ENCODE measurements at regions of chr19 and their contacts with region 1.

Region 1: GRCh38 chr19:6021878-6022569 is 44.1 kb upstream of the RANBP3 start:
- DNase-seq: peak; percentile 79
- H3K4me3 Mint-ChIP-seq: no peak overlapping the region
- H3K27ac Mint-ChIP-seq: no peak overlapping the region
- H3K4me1 Mint-ChIP-seq: no peaks in the 10 kb centered on the region
- H3K27me3 Mint-ChIP-seq: no peaks in the 10 kb centered on the region

Region 2: DNA sequence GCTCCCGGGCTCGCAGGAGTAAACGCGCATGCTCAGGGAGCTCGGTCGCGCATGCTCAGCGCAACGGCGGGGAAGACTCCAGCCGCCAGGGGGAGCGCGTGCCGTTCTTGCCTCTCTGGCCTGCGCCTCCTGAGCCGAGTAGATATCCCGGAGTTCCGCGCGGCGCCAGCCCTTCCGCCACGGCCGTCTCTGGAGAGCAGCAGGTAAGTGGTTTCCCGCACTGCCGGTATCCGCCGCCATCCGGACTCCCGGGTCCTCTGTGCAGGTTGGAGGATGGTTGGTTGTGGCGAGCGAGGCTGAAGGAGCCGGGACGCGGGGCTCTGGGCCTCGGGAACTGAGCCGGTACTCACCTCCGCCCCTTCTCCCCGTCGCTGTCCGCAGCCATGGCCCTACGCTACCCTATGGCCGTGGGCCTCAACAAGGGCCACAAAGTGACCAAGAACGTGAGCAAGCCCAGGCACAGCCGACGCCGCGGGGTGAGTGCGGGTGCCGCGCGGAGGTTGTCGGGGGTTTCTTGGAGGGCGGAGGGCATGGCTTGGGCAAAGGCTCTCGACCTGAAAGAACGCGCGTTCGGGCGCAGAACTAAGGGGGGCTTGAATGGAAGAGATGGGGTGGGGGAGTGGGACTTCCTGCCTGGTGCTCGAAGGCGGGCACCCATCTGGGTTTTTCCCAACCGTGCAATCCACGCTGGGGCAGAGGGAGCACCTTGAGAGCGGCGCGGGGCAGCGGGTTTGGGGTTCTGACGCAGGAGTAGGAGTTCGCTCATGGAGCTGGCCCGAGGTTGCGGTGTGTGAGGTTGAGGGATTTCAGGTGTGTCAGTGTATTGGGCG is 331.7 kb before region 1 on chr19 and contains the start of gene RPL36:
- CTCF ChIA-PET with region 1: no interaction called
- POLR2A ChIA-PET with region 1: no interaction called
- DNase-seq: peak; percentile 99
- H3K4me3 Mint-ChIP-seq: peak within 1 kb of the TSS; percentile 90
- H3K27ac Mint-ChIP-seq: peak within 1 kb of the TSS; percentile 91
- H3K4me1 Mint-ChIP-seq: peaks cover 41% of the 10 kb centered on the region
- H3K27me3 Mint-ChIP-seq: no peaks in the 10 kb centered on the region
- total RNA-seq, gene RPL36: 1,036 to 1,058 TPM

Region 3: GRCh38 chr19:5803752-5804515 is 218.1 kb before region 1 on chr19:
- CTCF ChIA-PET with region 1: interaction called, 30 read pairs
- POLR2A ChIA-PET with region 1: interaction called, 4 read pairs
- DNase-seq: peak; percentile 94
- H3K4me3 Mint-ChIP-seq: peak overlapping the region; percentile 63
- H3K27ac Mint-ChIP-seq: no peak overlapping the region
- H3K4me1 Mint-ChIP-seq: peaks cover 23% of the 10 kb centered on the region
- H3K27me3 Mint-ChIP-seq: peaks cover 38% of the 10 kb centered on the region

Region 4: GRCh38 chr19:5850743-5851293 is 171.2 kb before region 1 on chr19:
- CTCF ChIA-PET with region 1: no interaction called
- POLR2A ChIA-PET with region 1: no interaction called
- DNase-seq: no peak
- H3K4me3 Mint-ChIP-seq: no peak overlapping the region
- H3K27ac Mint-ChIP-seq: no peak overlapping the region
- H3K4me1 Mint-ChIP-seq: no peaks in the 10 kb centered on the region
- H3K27me3 Mint-ChIP-seq: peaks cover 4% of the 10 kb centered on the region

Region 5: DNA sequence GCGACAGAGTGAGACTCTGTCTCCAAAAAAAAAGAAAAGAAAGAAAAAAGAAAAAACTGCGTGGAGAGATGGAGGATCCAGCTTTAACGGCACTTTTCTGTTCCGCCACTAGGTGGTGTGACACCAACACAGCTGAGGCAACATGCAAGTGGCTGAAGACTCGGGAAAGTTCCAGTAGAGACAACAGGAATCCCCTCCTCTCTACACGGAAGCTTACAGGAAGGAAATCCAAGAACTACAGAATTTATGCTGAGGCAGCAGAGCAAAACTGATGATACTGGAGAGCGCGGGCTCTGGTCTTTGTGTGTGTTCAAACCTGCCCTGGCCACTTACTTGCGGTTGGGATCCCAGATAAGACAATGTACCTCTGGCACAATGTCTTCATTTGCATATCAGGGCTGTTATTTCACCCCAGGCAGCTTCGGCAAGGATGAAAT is 54.0 kb before region 1 on chr19:
- CTCF ChIA-PET with region 1: interaction called, 16 read pairs
- POLR2A ChIA-PET with region 1: no interaction called
- DNase-seq: peak; percentile 66
- H3K4me3 Mint-ChIP-seq: no peak overlapping the region
- H3K27ac Mint-ChIP-seq: peak overlapping the region; percentile 76
- H3K4me1 Mint-ChIP-seq: peaks cover 69% of the 10 kb centered on the region
- H3K27me3 Mint-ChIP-seq: no peaks in the 10 kb centered on the region

Region 6: DNA sequence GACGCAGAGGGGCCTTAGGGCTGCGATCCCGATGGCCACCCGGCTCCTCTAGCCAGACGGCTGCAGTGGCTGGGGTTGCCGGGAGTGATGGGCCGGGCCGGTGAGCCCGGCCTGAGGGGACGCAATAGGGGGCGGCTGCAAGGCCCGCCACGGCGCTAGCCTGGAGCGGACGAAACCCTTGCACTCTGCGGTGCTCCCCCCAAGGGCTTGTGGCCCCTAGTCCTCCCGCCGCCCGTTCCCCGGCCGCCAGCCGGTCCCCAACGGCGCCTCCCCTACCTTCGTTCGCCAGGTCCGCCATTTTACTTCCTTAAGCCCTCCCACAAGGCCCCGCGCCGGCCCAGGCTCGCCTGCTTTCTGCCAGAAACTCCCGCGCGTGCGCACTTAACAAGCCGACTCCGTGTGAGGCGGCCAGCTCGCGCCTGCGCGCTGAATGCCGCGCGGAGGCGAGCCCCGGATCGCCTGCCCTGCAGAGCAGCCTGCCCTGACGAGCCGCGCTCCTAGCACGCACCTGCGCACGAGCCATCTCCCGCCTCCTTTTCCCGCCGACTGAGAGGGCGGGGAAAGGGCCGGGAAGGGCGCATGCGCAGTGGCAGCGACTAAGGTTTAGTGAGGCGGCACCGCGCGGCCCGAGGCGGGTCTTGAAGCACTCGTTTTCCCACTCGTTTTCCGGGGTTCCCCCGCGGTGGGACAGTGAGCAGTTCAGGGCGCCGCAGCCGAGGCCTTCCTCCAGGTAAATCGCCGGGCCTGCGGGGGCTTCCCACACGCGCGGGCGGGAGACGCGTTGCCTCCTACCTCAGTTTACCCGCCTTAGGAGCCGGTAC is 44.0 kb before region 1 on chr19 and contains the start of gene RANBP3:
- CTCF ChIA-PET with region 1: interaction called, 14 read pairs
- POLR2A ChIA-PET with region 1: interaction called, 3 read pairs
- DNase-seq: peak; percentile 99
- H3K4me3 Mint-ChIP-seq: peak within 1 kb of the TSS; percentile 96
- H3K27ac Mint-ChIP-seq: peak within 1 kb of the TSS; percentile 89
- H3K4me1 Mint-ChIP-seq: peaks cover 64% of the 10 kb centered on the region
- H3K27me3 Mint-ChIP-seq: no peaks in the 10 kb centered on the region
- total RNA-seq, gene RANBP3: 78.1 to 85.1 TPM

Region 7: GRCh38 chr19:5987077-5987818 is 34.8 kb before region 1 on chr19:
- CTCF ChIA-PET with region 1: interaction called, 26 read pairs
- POLR2A ChIA-PET with region 1: no interaction called
- DNase-seq: peak; percentile 79
- H3K4me3 Mint-ChIP-seq: peak overlapping the region; percentile 69
- H3K27ac Mint-ChIP-seq: peak overlapping the region; percentile 45
- H3K4me1 Mint-ChIP-seq: peaks cover 45% of the 10 kb centered on the region
- H3K27me3 Mint-ChIP-seq: no peaks in the 10 kb centered on the region

Region 8: DNA sequence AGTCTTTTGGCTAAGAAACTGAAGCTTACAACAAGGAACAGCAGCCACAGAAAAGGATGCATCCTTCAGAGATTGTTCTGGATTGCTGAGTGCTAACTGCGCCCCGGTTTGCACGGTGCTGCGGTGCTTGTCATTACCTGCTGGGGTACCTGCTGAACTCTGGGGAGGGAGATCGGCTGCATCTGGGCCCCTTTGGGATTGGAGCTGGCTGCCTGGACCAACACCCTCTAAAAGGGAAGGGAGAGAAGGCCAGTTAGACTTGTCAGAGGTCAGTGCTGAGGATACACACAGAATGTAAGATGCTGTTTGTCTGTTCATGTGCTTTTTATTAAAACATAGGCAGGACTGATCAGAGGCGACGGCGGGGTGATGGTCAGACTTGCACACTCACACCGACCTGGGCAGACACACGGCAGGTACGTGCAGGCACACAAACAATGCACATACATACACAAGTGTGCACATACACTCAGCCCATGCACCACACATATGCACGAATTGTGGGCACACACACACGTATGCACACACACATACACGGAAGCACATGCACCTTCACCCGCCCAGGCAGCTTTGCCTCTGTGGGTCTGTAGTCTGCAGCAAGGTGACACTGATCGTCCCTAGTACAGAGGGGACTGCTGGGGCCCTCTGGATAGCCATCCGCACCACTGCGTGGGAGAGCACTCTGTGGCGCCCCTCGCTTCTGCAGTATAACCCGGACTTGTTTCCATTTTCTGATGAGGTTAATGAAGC is 22.2 kb after region 1 on chr19:
- CTCF ChIA-PET with region 1: no interaction called
- POLR2A ChIA-PET with region 1: no interaction called
- DNase-seq: no peak
- H3K4me3 Mint-ChIP-seq: no peak overlapping the region
- H3K27ac Mint-ChIP-seq: no peak overlapping the region
- H3K4me1 Mint-ChIP-seq: peaks cover 6% of the 10 kb centered on the region
- H3K27me3 Mint-ChIP-seq: no peaks in the 10 kb centered on the region

Region 9: DNA sequence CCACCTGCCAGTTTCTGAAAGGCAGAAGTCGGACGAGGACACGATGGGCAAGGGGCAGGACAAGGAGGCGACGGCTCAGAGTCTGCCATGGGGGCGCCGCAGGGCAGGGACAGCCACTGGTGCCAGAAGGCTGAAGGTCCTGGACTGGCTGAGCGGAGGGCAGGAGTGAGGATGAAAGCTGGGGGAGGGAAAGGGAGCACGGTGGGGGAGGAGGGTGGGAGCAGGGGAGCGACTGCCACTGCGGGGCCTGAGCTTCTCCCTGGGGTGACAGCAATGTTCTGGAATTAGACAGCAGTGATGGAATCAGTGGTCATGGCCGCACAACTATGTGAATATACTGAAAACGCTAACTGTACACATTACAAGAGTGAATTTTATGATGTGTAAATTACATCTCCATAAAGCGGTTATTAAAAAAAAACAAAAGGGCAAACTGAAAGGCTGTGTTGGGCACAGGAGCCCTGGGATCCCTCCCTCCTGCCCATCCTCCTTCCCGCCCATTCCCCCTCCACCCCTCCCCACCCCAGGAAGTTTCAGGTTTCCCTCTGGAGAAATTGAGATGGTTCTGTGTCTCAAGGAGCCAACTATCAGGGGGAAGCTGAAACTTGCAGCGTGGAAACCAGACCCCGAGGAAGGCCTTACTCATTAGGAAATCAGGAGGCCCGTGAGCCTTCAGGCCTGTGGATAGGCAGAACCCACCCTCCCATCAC is 241.9 kb after region 1 on chr19:
- CTCF ChIA-PET with region 1: no interaction called
- POLR2A ChIA-PET with region 1: no interaction called
- DNase-seq: no peak
- H3K4me3 Mint-ChIP-seq: no peak overlapping the region
- H3K27ac Mint-ChIP-seq: no peak overlapping the region
- H3K4me1 Mint-ChIP-seq: peaks cover 2% of the 10 kb centered on the region
- H3K27me3 Mint-ChIP-seq: no peaks in the 10 kb centered on the region

Measured in activated CD4-positive, alpha-beta memory T cell treated with anti-CD3 and anti-CD28 coated beads, Interleukin-2, amount 10 ng/mL, durations not matched to agents 7 days and 5 days (primary cell).